Right ventricle myocardium superior (tissue), 1 donor: ENCODE measurements at regions of chr3 and their contacts with region 1.

Region 1: GRCh38 chr3:42831321-42831713 is 22.1 kb downstream of the ACKR2 start:
- DNase-seq: peak; percentile 75
- ATAC-seq: peak; percentile 77

Region 2: DNA sequence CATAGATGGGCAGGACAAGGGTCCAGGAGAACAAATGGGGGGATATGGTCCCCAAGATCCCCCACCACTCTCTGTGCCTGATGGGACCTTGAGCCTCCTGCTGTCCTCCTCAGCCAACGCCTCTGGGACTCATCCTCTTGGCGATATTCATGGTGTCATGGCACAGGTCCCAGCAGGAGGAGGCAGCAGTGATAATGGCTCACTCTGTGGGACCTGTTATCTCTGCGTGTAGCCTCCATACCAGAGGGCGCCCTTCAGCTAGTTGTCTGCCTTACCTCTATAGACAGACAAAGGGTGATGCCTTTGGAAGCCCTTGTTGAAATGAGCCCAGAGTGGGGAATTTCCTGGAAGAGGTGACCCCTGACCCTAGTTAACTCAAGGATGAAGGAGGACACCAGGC is 170.4 kb before region 1 on chr3:
- intact Hi-C with region 1: no loop called
- DNase-seq: no peak
- ATAC-seq: peak; percentile 45

Region 3: GRCh38 chr3:42880601-42881451 is 49.5 kb after region 1 on chr3:
- intact Hi-C with region 1: loop called (anchors 5 kb)
- DNase-seq: peak; percentile 92
- ATAC-seq: peak; percentile 99